Activated naive CD4-positive, alpha-beta T cell treated with anti-CD3 and anti-CD28 coated beads for 36 hours (primary cell): ENCODE measurements at regions of chr1 and their contacts with region 1.

Region 1: DNA sequence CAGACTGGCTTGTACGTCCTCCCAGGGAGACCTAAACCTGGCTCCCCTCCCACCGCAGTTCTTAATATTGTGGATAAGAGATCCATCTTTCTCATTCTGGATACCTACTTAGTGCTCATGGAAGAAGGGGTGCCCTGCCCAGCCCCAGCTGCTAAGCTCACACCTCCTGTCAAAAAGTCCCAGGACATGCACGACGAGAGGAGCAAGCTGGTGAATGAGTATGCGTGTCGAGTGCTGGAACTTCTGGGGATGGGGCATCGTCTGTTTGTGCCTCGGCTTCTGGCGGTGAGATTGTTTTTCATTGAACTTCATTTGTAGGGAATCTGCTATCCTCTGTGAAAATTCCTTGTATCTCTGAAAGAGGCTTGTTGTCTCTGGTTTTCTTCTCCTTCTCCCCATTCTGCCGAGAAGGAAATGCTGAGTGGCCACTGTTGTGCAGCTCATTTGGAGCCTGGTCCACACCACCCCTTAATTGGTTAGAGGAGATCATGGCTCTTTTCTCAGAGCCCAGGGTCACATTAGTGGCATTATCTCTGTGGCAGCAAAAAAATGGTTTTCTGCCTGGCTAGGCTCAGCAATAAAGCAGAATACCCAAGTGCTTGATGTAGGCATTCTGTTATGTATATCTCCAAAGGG is 199.4 kb upstream of the CACYBP start:
- DNase-seq: peak; percentile 47
- H3K4me3 Mint-ChIP-seq: no peak overlapping the region
- H3K27ac Mint-ChIP-seq: no peak overlapping the region
- H3K4me1 Mint-ChIP-seq: peaks cover 8% of the 10 kb centered on the region
- H3K27me3 Mint-ChIP-seq: no peaks in the 10 kb centered on the region

Region 2: GRCh38 chr1:174550296-174550695 is 250.0 kb before region 1 on chr1:
- CTCF ChIA-PET with region 1: no interaction called
- intact Hi-C with region 1: no loop called
- DNase-seq: no peak
- H3K4me3 Mint-ChIP-seq: no peak overlapping the region
- H3K27ac Mint-ChIP-seq: no peak overlapping the region
- H3K4me1 Mint-ChIP-seq: no peaks in the 10 kb centered on the region
- H3K27me3 Mint-ChIP-seq: no peaks in the 10 kb centered on the region

Region 3: GRCh38 chr1:174769961-174770549 is 30.3 kb before region 1 on chr1:
- CTCF ChIA-PET with region 1: interaction called, 4 read pairs
- intact Hi-C with region 1: loop called (anchors 2 kb)
- DNase-seq: no peak
- H3K4me3 Mint-ChIP-seq: no peak overlapping the region
- H3K27ac Mint-ChIP-seq: no peak overlapping the region
- H3K4me1 Mint-ChIP-seq: peaks cover 6% of the 10 kb centered on the region
- H3K27me3 Mint-ChIP-seq: no peaks in the 10 kb centered on the region

Region 4: GRCh38 chr1:174912264-174912663 is 111.9 kb after region 1 on chr1:
- CTCF ChIA-PET with region 1: no interaction called
- intact Hi-C with region 1: loop called (anchors 1 kb)
- DNase-seq: peak; percentile 59
- H3K4me3 Mint-ChIP-seq: no peak overlapping the region
- H3K27ac Mint-ChIP-seq: no peak overlapping the region
- H3K4me1 Mint-ChIP-seq: peaks cover 46% of the 10 kb centered on the region
- H3K27me3 Mint-ChIP-seq: no peaks in the 10 kb centered on the region

Region 5: GRCh38 chr1:174982971-174983689 is 182.8 kb after region 1 on chr1:
- CTCF ChIA-PET with region 1: interaction called, 11 read pairs
- intact Hi-C with region 1: no loop called
- DNase-seq: peak; percentile 56
- H3K4me3 Mint-ChIP-seq: no peak overlapping the region
- H3K27ac Mint-ChIP-seq: no peak overlapping the region
- H3K4me1 Mint-ChIP-seq: peaks cover 18% of the 10 kb centered on the region
- H3K27me3 Mint-ChIP-seq: no peaks in the 10 kb centered on the region

Region 6: GRCh38 chr1:175015243-175015642 is 214.9 kb after region 1 on chr1:
- CTCF ChIA-PET with region 1: no interaction called
- intact Hi-C with region 1: no loop called
- DNase-seq: no peak
- H3K4me3 Mint-ChIP-seq: no peak overlapping the region
- H3K27ac Mint-ChIP-seq: peak overlapping the region; percentile 42
- H3K4me1 Mint-ChIP-seq: peaks cover 14% of the 10 kb centered on the region
- H3K27me3 Mint-ChIP-seq: no peaks in the 10 kb centered on the region